Activated T-helper 2 cell treated with anti-CD3 and anti-CD28 coated beads, Interferon-gamma antibody, Interleukin-2, Interleukin-4, amounts not matched to agents 10 μg/mL and 5 μg/mL and 100 μg/mL, durations not matched to agents 14 hours and 24 hours and 36 hours (primary cell): ENCODE measurements at regions of chr18 and their contacts with region 1.

Region 1: DNA sequence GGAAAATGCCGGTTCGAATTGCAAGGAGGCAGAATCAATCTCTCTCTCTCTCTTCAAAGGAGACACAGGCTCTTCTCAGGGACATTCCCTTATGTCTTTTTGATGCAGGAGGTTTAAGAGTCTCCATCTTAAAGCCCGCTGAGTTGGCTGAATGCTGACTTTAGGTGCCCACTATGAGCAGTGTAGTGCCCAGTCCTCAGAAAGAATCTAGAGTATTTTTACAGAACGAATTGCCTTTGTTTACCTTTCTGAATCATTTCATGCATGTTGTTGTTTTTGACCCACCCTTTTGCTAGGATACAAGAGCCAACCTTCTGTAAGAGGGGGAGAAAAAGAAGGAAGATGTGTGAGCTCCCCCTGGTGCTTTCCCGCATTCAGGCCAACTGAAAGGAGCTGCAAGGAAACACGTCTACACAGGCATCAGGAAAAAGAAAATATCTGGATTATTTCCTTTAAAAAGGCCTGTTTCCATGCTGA is 193.5 kb upstream of the TCF4 start:
- DNase-seq: no peak
- H3K4me3 Mint-ChIP-seq: no peak overlapping the region
- H3K27ac Mint-ChIP-seq: no peak overlapping the region
- H3K4me1 Mint-ChIP-seq: peaks cover 12% of the 10 kb centered on the region
- H3K27me3 Mint-ChIP-seq: peaks cover 51% of the 10 kb centered on the region

Region 2: DNA sequence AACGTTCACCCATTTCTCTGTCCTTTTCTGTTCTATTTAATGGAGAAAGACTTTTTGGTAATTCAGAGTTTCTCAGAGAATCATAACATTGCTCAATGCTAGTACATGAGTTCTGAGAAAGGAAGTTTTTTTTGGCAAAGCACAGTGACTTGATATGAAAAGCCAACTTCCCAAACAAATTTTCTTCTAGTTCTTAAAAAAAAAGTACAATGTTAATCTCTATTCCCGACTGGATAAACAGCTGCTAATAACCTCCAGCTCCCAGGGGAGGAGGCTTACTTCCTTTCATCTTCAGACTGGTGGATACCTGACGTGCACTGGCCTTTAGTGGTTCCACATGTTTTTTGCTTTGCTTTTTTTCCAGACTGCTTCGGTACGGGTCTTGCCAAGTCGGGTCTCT is 537.7 kb before region 1 on chr18:
- intact Hi-C with region 1: loop called (anchors 10 kb)
- DNase-seq: no peak
- H3K4me3 Mint-ChIP-seq: no peak overlapping the region
- H3K27ac Mint-ChIP-seq: no peak overlapping the region
- H3K4me1 Mint-ChIP-seq: peaks cover 31% of the 10 kb centered on the region
- H3K27me3 Mint-ChIP-seq: no peaks in the 10 kb centered on the region

Region 3: DNA sequence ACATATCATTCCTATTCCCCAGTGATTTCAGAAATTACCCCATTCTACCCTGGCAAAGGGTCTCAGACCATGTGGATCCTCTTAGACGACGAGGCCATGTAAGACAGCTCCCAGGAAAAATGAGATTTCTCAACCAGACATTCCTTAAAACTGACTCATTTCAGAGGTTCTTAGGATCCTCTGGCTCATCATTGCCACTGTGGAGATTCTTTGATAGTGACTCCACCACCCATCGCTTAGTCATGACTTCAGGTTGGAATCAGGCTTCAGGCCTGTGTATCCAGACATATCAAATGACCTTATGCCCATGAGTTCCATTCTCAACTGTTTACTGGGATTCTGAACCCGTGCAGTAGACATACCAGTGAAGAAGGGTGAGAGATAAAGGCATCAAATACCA is 52.0 kb after region 1 on chr18:
- intact Hi-C with region 1: no loop called
- DNase-seq: no peak
- H3K4me3 Mint-ChIP-seq: no peak overlapping the region
- H3K27ac Mint-ChIP-seq: no peak overlapping the region
- H3K4me1 Mint-ChIP-seq: no peaks in the 10 kb centered on the region
- H3K27me3 Mint-ChIP-seq: no peaks in the 10 kb centered on the region

Region 4: DNA sequence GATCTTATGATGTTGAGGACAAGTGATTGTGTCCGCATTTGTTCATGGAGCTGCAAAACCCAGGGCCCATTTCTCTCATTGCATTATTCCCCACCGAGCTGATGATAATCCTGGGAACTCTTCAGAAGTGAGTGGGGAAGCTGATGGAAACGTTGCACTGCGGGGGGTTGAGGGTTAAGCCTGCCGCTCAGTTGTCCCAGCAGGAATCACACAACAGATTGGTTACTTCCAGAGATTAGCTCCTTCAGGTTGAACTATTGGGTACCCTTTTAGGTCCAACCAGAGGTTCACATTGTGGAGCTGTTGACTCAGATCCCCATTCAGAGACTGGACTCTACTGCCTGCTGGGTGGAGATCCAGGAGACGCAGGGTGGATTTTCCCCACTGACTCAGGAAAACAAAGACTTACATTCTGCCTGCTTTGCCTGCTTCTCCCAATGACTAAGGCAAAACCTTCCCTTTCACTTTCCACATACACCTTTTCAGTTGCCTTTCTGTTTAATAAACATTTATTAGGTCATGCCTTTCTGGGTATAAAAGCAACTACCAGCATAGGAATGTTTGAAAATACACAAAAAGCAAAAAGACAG is 570.5 kb after region 1 on chr18:
- intact Hi-C with region 1: no loop called
- DNase-seq: no peak
- H3K4me3 Mint-ChIP-seq: no peak overlapping the region
- H3K27ac Mint-ChIP-seq: no peak overlapping the region
- H3K4me1 Mint-ChIP-seq: no peaks in the 10 kb centered on the region
- H3K27me3 Mint-ChIP-seq: no peaks in the 10 kb centered on the region

Region 5: DNA sequence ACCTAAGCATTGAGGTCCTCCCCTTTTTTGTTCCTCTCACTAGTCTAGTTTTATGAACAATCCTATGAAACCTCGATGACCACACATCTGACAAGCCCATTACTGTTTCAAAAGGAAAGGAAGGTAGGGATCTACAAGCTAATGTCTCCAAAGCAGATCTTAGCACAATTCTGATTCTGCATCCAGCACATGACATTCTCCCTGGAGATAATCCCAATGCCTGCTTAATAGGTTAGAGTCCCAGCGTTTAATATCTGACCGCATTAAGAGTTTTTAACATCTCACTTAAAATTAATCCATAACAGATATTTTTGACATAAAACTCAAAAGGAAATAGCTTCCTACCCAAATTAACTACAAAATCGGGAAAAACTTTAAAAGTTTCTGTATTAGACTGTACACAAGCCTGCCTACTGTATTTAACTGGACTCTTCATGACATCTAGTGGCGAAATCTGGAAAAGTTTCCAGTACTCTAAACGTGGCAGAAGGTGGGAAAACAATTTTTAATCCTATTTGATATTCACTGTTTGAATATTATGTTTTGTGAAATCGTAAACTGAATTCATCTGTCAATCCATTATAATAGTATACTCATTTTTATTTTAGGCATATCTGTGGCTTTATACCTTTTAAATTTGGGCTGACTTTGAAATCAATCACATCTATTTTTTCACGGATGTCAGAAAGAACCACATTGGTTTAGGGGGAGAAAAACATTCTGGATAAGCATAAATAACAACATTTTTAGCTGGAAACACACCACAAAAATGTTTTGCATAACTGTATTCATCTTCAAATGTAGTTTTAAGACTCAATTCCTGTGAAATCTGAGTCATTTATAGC is 794.5 kb after region 1 on chr18:
- intact Hi-C with region 1: loop called (anchors 5 kb)
- DNase-seq: no peak
- H3K4me3 Mint-ChIP-seq: no peak overlapping the region
- H3K27ac Mint-ChIP-seq: no peak overlapping the region
- H3K4me1 Mint-ChIP-seq: peaks cover 6% of the 10 kb centered on the region
- H3K27me3 Mint-ChIP-seq: peaks cover 9% of the 10 kb centered on the region